Activated T-helper 1 cell treated with anti-CD3 and anti-CD28 coated beads, Interleukin-12 subunit alpha, Interleukin-12 subunit beta, Interleukin-2, Interleukin-4 antibody, amounts not matched to agents 30 ng/mL and 10 ng/mL and 1 ng/mL, durations not matched to agents 14 hours and 24 hours and 36 hours (primary cell): ENCODE measurements at regions of chr6 and their contacts with region 1.

Region 1: DNA sequence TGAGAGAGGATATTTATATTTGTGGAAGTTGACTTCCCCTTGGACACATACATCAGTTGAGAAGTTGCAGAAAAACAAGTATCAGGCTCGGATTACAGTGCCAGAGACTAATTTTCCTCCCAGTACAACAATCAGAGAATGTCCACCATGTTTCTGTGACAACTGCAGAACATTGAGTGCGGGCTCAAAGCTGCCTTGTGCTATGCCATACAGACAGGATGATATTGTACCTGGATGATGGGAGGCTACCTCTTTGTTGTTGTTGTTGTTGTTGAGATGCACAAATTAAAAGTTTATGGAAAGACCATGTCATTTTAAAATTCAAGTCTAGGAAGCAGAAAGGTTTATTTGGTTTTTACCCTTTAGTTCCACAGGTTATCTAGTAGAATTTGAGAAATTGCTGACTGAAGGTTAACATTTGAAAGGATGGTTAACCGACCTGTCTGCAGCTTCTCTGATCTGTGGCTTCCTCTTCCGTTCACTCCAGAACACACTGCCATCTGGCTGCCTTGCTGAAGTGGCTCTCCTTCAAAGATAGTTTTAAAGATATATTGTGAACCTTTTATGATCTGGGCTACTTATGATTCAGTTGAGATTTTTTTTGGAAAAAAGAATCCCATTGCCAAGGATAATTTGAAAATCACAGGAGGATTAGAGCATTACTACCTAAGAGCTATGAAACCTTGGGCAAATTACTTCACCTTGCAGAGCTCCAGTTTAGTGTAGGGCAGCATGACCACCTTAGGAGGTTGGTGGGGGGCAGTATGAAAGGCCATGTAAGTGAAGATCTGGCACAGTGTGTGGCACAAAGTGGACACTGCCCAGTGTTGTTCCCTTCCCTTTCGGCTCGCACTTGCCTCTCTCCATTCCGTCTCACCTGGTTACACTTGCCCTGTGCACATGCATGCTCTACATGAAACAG is 15.9 kb downstream of the TMEM200A start:
- DNase-seq: peak; percentile 26
- H3K4me3 Mint-ChIP-seq: peak overlapping the region; percentile 53
- H3K27ac Mint-ChIP-seq: no peak overlapping the region
- H3K4me1 Mint-ChIP-seq: peaks cover 19% of the 10 kb centered on the region
- H3K27me3 Mint-ChIP-seq: peaks cover 9% of the 10 kb centered on the region

Region 2: GRCh38 chr6:130365166-130366106 is 16.3 kb before region 1 on chr6 and contains the start of gene TMEM200A:
- intact Hi-C with region 1: loop called (anchors 2 kb)
- DNase-seq: peak; percentile 41
- H3K4me3 Mint-ChIP-seq: peak within 1 kb of the TSS; percentile 78
- H3K27ac Mint-ChIP-seq: no peak within 1 kb of the TSS
- H3K4me1 Mint-ChIP-seq: peaks cover 25% of the 10 kb centered on the region
- H3K27me3 Mint-ChIP-seq: peaks cover 50% of the 10 kb centered on the region
- total RNA-seq, gene TMEM200A: 0.67 and 0.69 TPM in 2 replicates